PC-3 (cell line): ENCODE measurements at regions of chr15 and their contacts with region 1.

Region 1: GRCh38 chr15:40857601-40858341 is 13.9 kb downstream of the SPINT1 start:
- DNase-seq: peak; percentile 97
- ATAC-seq: peak; percentile 77
- H3K4me3 ChIP-seq: no peak overlapping the region
- H3K27ac ChIP-seq: peak overlapping the region; percentile 94
- H3K4me1 ChIP-seq: peaks cover 39% of the 10 kb centered on the region
- H3K27me3 ChIP-seq: no peaks in the 10 kb centered on the region
- CTCF ChIP-seq: peak; percentile 96

Region 2: DNA sequence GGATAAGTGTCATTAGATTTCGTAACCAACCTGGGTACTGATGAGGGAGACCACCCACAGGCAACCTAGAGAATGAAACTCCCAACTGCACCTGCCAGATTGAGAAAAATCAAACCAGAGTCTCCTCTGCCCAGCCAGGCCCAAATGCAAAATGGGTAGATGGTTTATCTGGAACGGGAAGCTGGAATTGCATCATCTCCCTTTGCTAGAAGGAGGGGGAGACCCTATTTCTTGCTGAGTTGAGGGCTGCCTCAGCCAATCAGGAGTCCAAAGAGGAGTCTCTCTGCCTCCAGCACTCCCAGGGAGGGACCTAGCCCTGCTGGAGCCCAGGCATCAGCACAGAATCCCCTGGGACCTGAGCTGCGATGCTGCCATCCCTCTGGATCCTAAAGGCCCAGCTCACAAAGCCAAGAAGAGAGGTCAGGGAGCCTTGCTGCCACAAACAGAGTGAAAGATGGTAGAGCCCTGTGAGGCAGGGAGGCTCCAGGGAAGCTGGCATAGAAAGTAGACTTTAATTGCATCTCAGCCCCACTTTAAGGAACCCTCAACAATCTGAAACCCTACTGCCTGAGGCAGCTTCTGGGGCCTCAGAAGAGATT is 110.8 kb before region 1 on chr15:
- CTCF ChIA-PET with region 1: interaction called, 10 read pairs
- POLR2A ChIA-PET with region 1: interaction called, 8 read pairs
- intact Hi-C with region 1: loop called (anchors 1 kb)
- DNase-seq: no peak
- ATAC-seq: no peak
- H3K4me3 ChIP-seq: no peak overlapping the region
- H3K27ac ChIP-seq: no peak overlapping the region
- H3K4me1 ChIP-seq: peaks cover 5% of the 10 kb centered on the region
- H3K27me3 ChIP-seq: no peaks in the 10 kb centered on the region
- CTCF ChIP-seq: no peak

Region 3: GRCh38 chr15:40782580-40783227 is 75.1 kb before region 1 on chr15:
- CTCF ChIA-PET with region 1: interaction called, 8 read pairs
- POLR2A ChIA-PET with region 1: no interaction called
- intact Hi-C with region 1: loop called (anchors 1 kb)
- DNase-seq: peak; percentile 90
- ATAC-seq: peak; percentile 90
- H3K4me3 ChIP-seq: no peak overlapping the region
- H3K27ac ChIP-seq: no peak overlapping the region
- H3K4me1 ChIP-seq: peaks cover 28% of the 10 kb centered on the region
- H3K27me3 ChIP-seq: no peaks in the 10 kb centered on the region
- CTCF ChIP-seq: peak; percentile 93

Region 4: DNA sequence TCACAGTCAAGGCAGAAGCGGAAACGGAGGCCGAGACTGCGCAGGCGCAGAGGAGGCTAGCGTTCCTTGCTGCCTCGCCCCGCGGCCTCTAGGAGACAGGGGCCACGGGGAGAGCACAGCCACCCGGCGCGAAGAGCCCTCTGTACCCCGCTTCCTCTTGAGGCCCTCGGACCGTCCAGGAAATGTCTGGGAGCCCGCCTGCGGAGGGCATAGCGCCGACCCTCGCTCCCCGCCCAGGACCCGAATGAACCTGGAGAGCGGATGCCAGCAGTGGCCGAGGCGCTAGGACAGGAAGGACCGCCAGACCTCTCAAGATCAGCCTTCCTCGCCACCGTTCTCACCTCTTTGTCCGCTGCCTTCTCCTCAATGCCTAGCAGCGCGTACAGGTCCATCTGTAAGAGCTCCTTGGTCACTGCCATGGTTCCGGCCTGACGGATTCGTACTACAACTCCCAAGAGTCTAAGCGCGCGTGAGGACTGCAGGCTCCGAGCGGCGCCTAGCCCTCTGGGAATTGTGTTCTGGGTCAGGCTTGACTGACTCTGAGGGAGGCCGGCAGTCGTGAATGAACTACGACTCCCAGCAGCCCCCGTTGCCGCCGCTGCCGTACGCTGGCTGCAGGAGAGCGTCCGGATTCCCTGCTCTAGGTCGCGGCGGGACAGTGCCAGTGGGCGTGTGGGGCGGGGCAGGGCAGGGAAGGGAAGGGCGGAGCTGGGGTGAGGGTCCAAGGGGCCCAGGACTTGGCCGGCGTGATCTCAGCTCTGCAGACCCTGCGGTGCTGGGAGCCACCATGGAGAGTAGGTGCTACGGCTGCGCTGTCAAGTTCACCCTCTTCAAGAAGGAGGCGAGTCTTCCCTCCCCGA is 50.5 kb before region 1 on chr15 and contains the starts of genes DNAJC17 and ZFYVE19:
- CTCF ChIA-PET with region 1: interaction called, 12 read pairs
- POLR2A ChIA-PET with region 1: no interaction called
- intact Hi-C with region 1: no loop called
- DNase-seq: peak; percentile 98
- ATAC-seq: peak; percentile 98
- H3K4me3 ChIP-seq: peak within 1 kb of the TSS; percentile 98
- H3K27ac ChIP-seq: peak within 1 kb of the TSS; percentile 65
- H3K4me1 ChIP-seq: peaks cover 13% of the 10 kb centered on the region
- H3K27me3 ChIP-seq: no peaks in the 10 kb centered on the region
- CTCF ChIP-seq: no peak
- total RNA-seq, gene DNAJC17: 51.2 and 53.3 TPM in 2 replicates
- total RNA-seq, gene ZFYVE19: 32.3 and 39.6 TPM in 2 replicates

Region 5: GRCh38 chr15:40847205-40847961 is 10.4 kb before region 1 on chr15:
- CTCF ChIA-PET with region 1: interaction called, 11 read pairs
- POLR2A ChIA-PET with region 1: interaction called, 3 read pairs
- intact Hi-C with region 1: no loop called
- DNase-seq: peak; percentile 85
- ATAC-seq: peak; percentile 65
- H3K4me3 ChIP-seq: peak overlapping the region; percentile 88
- H3K27ac ChIP-seq: peak overlapping the region; percentile 53
- H3K4me1 ChIP-seq: peaks cover 38% of the 10 kb centered on the region
- H3K27me3 ChIP-seq: no peaks in the 10 kb centered on the region
- CTCF ChIP-seq: no peak

Region 6: DNA sequence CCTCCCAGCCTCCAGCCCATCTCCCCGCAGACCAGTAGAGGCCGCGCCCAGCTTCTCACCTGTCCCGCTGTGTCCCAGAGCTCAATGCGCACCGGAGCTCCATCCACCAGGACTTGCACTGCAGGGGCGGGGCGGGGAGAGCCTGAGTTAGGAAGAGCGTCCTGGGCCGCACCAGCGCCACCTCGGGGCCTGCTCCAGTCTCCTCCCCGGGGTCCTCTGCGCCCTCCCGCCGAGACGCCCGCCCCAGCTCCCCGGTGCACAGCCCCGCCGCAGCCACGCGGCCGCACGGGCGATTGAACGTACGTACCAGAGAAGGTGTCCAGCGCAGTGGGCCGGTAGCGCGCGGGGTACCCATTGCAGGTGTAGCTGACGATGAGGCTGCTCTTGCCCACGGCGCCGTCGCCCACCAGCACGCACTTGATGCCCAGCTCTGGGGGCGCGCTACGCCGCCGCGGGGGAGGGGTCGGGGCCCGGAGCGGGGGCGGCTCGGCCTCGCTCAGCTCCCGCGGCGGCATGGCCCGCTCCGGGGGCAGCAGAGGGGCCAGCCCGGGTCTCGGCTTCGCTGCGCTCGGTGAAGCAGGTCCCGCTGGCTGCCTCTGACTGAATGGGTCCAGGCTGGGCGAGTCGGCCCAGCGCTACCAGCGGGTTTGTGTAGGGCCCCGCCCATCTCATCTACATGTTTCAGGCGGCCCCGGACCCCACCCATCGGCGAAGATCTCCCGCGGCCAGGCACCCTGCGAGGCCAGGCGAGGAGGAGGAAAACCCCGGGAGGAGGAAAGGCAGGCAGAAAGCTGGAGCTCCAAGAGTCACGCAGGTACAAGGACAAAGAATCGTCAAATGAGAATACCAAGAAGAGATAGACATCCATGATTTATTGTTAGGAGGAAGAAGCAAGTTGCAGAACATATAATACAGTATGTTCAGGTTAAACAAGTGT is 16.1 kb after region 1 on chr15 and contains the start of gene RHOV:
- CTCF ChIA-PET with region 1: interaction called, 59 read pairs
- POLR2A ChIA-PET with region 1: interaction called, 5 read pairs
- intact Hi-C with region 1: no loop called
- DNase-seq: peak; percentile 89
- ATAC-seq: peak; percentile 90
- H3K4me3 ChIP-seq: peak within 1 kb of the TSS; percentile 92
- H3K27ac ChIP-seq: peak within 1 kb of the TSS; percentile 95
- H3K4me1 ChIP-seq: peaks cover 36% of the 10 kb centered on the region
- H3K27me3 ChIP-seq: no peaks in the 10 kb centered on the region
- CTCF ChIP-seq: peak; percentile 63
- total RNA-seq, gene RHOV: 39.5 and 52.2 TPM in 2 replicates

Region 7: DNA sequence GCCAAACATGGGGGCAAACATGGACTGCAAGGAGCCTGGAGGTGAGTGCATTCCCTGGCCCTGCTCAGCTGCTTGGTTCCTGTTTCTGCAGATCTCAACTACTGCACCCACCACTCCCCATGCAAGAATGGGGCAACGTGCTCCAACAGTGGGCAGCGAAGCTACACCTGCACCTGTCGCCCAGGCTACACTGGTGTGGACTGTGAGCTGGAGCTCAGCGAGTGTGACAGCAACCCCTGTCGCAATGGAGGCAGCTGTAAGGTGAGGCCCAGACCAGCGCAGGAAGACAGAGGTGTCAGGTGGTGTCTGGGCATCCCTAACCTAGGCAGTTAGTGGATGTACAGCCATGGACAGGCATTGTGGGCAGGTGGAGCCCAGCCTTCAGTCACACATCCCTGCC is 76.7 kb after region 1 on chr15:
- CTCF ChIA-PET with region 1: no interaction called
- POLR2A ChIA-PET with region 1: no interaction called
- intact Hi-C with region 1: no loop called
- DNase-seq: no peak
- ATAC-seq: no peak
- H3K4me3 ChIP-seq: no peak overlapping the region
- H3K27ac ChIP-seq: no peak overlapping the region
- H3K4me1 ChIP-seq: peaks cover 47% of the 10 kb centered on the region
- H3K27me3 ChIP-seq: peaks cover 5% of the 10 kb centered on the region; the same call in 1 of the 2 replicates
- CTCF ChIP-seq: no peak

Region 8: DNA sequence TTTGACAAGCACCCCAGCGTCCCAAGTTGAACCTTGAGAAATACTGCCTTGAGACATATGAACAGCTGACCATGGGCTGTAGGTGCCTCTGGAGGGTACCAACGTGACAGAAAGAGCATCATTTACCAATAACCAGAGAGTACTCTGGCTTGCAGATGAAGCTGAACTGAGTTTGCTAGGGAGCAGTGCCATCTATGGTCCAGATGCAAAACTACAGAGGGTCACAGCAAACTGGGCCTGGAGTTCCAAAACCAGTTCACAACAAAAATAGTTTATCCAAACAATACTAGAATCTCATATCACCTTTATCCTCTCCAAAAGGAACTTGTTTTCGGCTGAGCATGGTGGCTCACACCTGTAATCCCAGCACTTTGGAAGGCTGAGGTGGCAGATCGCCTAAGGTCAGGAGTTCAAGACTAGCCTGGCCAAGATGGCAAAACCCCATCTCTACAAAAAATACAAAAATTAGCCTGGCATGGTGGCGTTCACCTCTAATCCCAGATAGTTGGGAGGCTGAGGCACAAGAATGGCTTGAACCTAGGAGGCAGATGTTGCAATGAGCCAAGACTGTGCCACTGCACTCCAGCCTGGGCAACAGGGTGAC is 164.8 kb after region 1 on chr15:
- CTCF ChIA-PET with region 1: no interaction called
- POLR2A ChIA-PET with region 1: no interaction called
- intact Hi-C with region 1: loop called (anchors 5 kb)
- DNase-seq: peak; percentile 68
- ATAC-seq: peak; percentile 69
- H3K4me3 ChIP-seq: no peak overlapping the region
- H3K27ac ChIP-seq: no peak overlapping the region
- H3K4me1 ChIP-seq: peaks cover 13% of the 10 kb centered on the region
- H3K27me3 ChIP-seq: no peaks in the 10 kb centered on the region
- CTCF ChIP-seq: peak; percentile 84